PC-9 (cell line): ENCODE measurements at regions of chr1 and their contacts with region 1.

Region 1: DNA sequence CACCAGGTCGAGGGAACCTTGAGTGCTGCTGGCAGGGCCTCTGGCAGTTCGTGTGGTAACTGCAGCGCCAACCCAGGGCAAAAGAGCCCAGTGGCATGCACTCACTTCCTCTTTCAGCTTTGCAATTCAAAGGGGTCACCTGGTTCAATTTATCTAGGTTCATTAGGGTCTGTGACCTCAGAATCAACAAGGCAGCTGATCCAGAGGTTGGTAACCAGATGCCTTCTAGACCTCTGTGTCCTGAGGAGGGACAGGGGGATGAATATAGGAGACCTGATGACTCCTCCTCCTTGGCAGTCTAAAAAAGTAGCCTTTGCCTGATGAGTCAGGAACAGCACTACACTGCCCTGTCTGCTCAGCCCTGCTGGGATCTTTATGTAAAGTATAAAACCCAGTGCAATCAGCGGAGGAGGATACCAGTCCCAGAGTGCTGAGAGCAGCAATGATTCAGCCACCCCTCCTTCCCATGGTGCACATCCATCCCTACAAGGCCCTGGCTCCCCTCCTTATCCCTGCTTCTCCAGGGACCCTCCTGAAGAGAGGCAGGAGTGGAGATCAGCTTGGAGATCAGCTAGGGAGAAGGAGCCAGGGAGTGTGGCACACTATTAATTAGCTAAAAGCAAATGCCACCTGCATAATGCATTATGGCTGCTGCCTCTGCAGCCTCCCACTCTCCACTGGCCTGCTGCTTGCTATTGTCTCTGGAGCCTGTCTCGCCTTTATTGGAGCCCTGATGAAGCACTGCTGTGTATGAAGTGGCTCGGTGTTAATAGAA is 11.2 kb upstream of the FMOD start:
- DNase-seq: no peak
- H3K4me3 ChIP-seq: no peak overlapping the region
- H3K27ac ChIP-seq: no peak overlapping the region
- H3K4me1 ChIP-seq: no peaks in the 10 kb centered on the region
- H3K27me3 ChIP-seq: peaks cover 94% of the 10 kb centered on the region
- CTCF ChIP-seq: no peak

Region 2: GRCh38 chr1:203099805-203100516 is 262.2 kb before region 1 on chr1:
- CTCF ChIA-PET with region 1: no interaction called
- POLR2A ChIA-PET with region 1: no interaction called
- intact Hi-C with region 1: no loop called
- DNase-seq: no peak
- H3K4me3 ChIP-seq: no peak overlapping the region
- H3K27ac ChIP-seq: peak overlapping the region; percentile 63
- H3K4me1 ChIP-seq: peaks cover 26% of the 10 kb centered on the region
- H3K27me3 ChIP-seq: no peaks in the 10 kb centered on the region
- CTCF ChIP-seq: no peak

Region 3: DNA sequence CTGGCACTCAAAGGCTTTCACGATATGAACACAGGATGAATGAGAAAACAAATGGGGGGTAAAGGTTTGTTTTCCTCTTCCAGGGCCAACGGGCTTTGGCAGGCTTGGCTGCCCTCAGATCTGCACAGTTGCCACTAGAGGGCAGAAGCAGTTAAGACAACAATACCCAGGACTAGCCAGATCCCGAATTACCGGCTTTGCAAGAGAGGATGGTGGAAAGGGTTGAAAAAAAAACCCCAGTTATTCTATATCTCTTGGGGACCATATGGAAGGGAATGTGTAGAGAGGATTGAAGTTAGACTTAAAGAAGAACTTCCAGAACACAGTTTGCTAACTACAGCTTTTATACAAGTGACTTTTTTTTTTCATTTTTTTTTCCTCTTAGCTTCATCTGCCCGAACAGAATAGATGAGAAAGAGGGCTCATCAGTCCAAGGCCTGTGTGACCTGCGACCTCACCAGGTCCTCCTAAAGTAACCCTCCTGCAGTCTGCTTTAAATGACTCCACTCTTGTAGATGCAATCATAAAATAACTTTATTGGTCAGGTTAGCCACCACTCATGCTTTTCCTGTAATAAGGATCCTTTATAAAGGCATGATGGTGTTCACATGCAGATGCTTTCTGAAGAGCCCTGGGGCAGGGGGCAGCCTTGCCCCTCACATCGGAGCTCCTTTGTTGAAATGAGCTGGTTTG is 21.9 kb before region 1 on chr1:
- CTCF ChIA-PET with region 1: no interaction called
- POLR2A ChIA-PET with region 1: no interaction called
- intact Hi-C with region 1: no loop called
- DNase-seq: peak; percentile 67 to 75
- H3K4me3 ChIP-seq: no peak overlapping the region
- H3K27ac ChIP-seq: no peak overlapping the region
- H3K4me1 ChIP-seq: no peaks in the 10 kb centered on the region
- H3K27me3 ChIP-seq: peaks cover 32% of the 10 kb centered on the region
- CTCF ChIP-seq: peak; percentile 90

Region 4: GRCh38 chr1:203401199-203401877 is 39.2 kb after region 1 on chr1:
- CTCF ChIA-PET with region 1: interaction called, 13 read pairs
- POLR2A ChIA-PET with region 1: no interaction called
- intact Hi-C with region 1: no loop called
- DNase-seq: no peak
- H3K4me3 ChIP-seq: no peak overlapping the region
- H3K27ac ChIP-seq: no peak overlapping the region
- H3K4me1 ChIP-seq: no peaks in the 10 kb centered on the region
- H3K27me3 ChIP-seq: peaks cover 56% of the 10 kb centered on the region
- CTCF ChIP-seq: no peak

Region 5: DNA sequence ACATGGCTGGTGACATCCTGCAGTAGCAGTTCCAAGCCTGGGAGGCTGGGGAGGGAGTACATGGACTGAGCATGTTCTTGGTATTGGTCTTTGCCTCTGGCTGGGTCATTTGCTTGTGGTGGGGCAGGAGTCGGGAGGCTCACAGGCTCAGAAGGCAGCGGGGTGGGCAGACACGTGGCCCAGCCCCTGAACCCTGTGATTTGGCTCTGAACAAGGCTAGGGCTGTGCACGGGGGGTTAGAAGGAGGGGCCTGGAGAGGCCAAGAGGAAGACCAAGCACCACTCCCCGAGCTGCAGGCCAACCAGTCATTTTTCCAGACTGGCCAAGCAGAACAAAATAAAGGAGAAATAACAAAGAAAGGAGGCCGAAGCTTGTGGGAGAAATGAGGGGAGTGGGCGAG is 103.8 kb after region 1 on chr1:
- CTCF ChIA-PET with region 1: interaction called, 10 read pairs
- POLR2A ChIA-PET with region 1: no interaction called
- intact Hi-C with region 1: no loop called
- DNase-seq: no peak
- H3K4me3 ChIP-seq: no peak overlapping the region
- H3K27ac ChIP-seq: no peak overlapping the region
- H3K4me1 ChIP-seq: peaks cover 24% of the 10 kb centered on the region
- H3K27me3 ChIP-seq: no peaks in the 10 kb centered on the region
- CTCF ChIP-seq: no peak